Naive thymus-derived CD4-positive, alpha-beta T cell (primary cell): ENCODE measurements at regions of chr12 and their contacts with region 1.

Region 1: GRCh38 chr12:84294246-84294645 is 618.4 kb downstream of the SLC6A15 start:
- DNase-seq: no peak
- ATAC-seq: no peak
- H3K4me3 ChIP-seq: no peak overlapping the region
- H3K4me3 Mint-ChIP-seq: no peak overlapping the region
- H3K27ac ChIP-seq: no peak overlapping the region
- H3K27ac Mint-ChIP-seq: no peak overlapping the region
- H3K4me1 ChIP-seq: no peaks in the 10 kb centered on the region
- H3K4me1 Mint-ChIP-seq: no peaks in the 10 kb centered on the region
- H3K27me3 ChIP-seq: no peaks in the 10 kb centered on the region
- H3K27me3 Mint-ChIP-seq: no peaks in the 10 kb centered on the region

Region 2: GRCh38 chr12:83676781-83677295 is 617.4 kb before region 1 on chr12:
- CTCF ChIA-PET with region 1: no interaction called
- POLR2A ChIA-PET with region 1: no interaction called
- intact Hi-C with region 1: loop called in 1 of 2 experiments (anchors 5 kb)
- DNase-seq: no peak
- ATAC-seq: no peak
- H3K4me3 ChIP-seq: no peak overlapping the region
- H3K4me3 Mint-ChIP-seq: no peak overlapping the region
- H3K27ac ChIP-seq: no peak overlapping the region
- H3K27ac Mint-ChIP-seq: no peak overlapping the region
- H3K4me1 ChIP-seq: no peaks in the 10 kb centered on the region
- H3K4me1 Mint-ChIP-seq: no peaks in the 10 kb centered on the region
- H3K27me3 ChIP-seq: no peaks in the 10 kb centered on the region
- H3K27me3 Mint-ChIP-seq: no peaks in the 10 kb centered on the region